ENCODE measurements at regions of chr11 and their contacts with region 1.

Region 1: DNA sequence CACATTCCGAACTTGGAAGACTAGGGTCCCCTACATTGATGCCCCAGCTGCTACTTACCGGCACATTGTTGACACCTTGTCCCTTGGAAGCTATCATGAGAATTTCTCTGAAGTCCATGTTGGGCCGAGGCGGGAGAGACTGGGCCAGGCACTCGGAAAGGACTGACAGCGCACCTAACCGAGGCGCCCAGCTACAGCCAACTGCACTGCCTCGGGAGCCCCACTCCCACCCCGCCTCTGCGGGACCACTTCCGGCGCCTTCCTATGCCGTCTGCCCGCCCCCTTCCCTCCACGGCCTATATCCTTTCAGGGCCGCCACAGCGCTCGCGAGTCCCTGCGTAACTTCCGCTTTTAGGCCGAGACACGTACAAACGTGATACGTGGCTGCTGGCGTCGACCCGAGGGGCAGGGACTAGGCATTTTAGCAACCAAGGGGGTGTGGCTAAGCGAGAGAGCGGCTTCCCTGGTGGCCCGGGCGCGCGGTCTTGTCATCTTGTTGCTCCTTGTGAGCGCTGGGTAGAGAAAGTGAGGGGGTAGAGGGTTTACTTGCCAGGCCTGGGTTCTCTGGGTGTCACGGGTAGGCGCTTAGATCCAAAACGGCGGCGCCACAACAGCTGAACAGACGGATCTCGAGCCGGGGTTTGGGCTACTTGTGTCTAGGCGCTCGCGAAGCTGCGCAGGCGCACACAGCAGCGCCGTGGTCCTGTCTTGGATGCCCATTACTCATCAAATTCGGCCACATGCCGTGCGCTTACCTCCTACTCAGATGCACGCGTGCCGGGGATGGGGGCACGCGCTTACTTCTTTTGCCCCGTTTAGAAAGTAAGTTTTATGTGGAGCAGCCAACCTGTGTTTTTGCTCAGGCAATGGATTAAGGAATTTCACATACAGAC is at the start of gene SPTY2D1:
- DNase-seq: peak; percentile 100
- H3K4me3 ChIP-seq: peak within 1 kb of the TSS; percentile 75 to 96
- H3K27ac ChIP-seq: peak within 1 kb of the TSS; percentile 95 to 98
- H3K4me1 ChIP-seq: peaks cover 0 to 23% (median 16%) of the 10 kb centered on the region in 4 donors
- H3K27me3 ChIP-seq: no peaks in the 10 kb centered on the region
- CTCF ChIP-seq: peak in 1 of 2 experiments; percentile 7

Region 2: DNA sequence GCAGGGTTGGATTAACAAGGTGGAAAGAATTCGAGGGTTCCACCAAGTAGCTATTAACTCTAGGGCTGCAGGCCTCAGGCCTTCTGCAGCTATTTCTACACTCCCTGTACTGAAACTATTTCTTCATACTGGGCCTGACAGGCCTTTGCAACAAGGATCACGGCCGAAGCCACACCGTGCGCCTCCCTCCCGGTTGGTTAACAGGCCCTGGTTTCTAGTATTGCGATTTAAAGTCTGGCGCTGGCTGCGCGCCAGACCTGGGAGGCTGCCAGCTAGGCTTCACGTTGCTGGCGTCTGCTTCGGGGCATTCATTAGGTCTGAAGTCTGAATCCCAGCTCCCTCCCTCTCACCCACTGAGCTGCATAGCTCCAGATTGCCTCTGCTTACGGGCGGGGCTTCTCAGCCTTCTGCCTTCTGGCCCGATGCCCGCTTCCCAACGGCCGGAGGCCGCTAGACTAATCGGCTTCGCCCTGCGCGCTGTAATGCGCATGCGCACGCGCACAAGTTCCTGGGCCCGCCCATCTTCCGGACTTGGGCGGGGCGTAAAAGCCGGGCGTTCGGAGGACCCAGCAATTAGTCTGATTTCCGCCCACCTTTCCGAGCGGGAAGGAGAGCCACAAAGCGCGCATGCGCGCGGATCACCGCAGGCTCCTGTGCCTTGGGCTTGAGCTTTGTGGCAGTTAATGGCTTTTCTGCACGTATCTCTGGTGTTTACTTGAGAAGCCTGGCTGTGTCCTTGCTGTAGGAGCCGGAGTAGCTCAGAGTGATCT is 238.5 kb before region 1 on chr11:
- intact Hi-C with region 1: loop called (anchors 10 kb)
- DNase-seq: peak; percentile 98 to 99
- H3K4me3 ChIP-seq: peak overlapping the region; percentile 90 to 97
- H3K27ac ChIP-seq: peak overlapping the region; percentile 97 to 99
- H3K4me1 ChIP-seq: peaks cover 0 to 45% (median 27%) of the 10 kb centered on the region in 4 donors
- H3K27me3 ChIP-seq: no peaks in the 10 kb centered on the region
- CTCF ChIP-seq: no peak

Region 3: DNA sequence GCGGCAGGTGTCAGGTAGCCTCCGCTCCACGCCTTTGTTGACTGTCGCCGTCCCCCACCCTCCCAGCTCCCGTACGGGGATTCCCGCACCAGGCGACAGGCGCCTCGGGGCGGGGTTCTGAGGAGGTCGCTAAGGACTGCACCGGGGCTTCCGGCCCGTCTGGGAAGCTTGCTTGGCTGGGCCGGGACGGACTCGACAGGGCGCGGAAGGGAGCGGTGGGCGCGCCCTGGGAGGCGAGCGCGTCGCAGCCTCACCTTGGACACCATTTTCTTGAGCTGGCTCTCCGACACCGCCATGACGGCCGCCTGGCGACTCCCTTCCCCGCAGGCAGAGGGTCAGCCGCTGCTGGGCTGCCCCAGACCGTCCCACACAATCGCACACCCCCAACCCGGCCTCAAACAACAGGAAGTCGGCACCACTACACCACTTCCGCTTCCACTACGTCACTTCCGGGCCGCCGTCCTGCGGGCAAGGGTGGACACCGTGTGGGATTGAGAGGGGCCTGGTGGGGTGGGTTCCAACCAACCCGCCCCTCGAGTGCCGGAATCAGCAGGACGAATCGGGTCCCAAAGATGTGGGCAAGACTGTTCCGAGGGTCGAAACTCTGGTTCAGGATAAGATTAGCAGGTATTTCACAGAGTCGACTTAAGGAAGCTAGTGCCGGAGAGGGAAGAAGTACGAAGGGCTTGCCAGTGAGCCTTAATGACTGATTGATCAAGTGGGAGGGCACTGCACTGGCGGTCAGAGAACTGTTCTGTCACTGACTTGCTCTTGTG is 107.7 kb before region 1 on chr11 and contains the start of gene TSG101:
- intact Hi-C with region 1: loop called (anchors 10 kb)
- DNase-seq: peak; percentile 94 to 95
- H3K4me3 ChIP-seq: peak within 1 kb of the TSS; percentile 84 to 95
- H3K27ac ChIP-seq: peak within 1 kb of the TSS; percentile 92 to 93
- H3K4me1 ChIP-seq: peaks cover 0 to 37% (median 11%) of the 10 kb centered on the region in 4 donors
- H3K27me3 ChIP-seq: no peaks in the 10 kb centered on the region
- CTCF ChIP-seq: no peak

Region 4: GRCh38 chr11:18588297-18589252 is 45.8 kb before region 1 on chr11 and contains the start of gene UEVLD:
- intact Hi-C with region 1: loop called (anchors 10 kb)
- DNase-seq: peak; percentile 87 to 94
- H3K4me3 ChIP-seq: peak within 1 kb of the TSS; percentile 66 to 67
- H3K27ac ChIP-seq: peak within 1 kb of the TSS; percentile 72 to 80
- H3K4me1 ChIP-seq: peaks cover 0 to 42% (median 25%) of the 10 kb centered on the region in 4 donors
- H3K27me3 ChIP-seq: no peaks in the 10 kb centered on the region
- CTCF ChIP-seq: no peak

Region 5: GRCh38 chr11:18721561-18722292 is 87.3 kb after region 1 on chr11:
- intact Hi-C with region 1: loop called (anchors 5 kb)
- DNase-seq: peak in 1 of 2 donors; percentile 39
- H3K4me3 ChIP-seq: peak overlapping the region; percentile 50 to 72
- H3K27ac ChIP-seq: peak overlapping the region; percentile 76 to 78
- H3K4me1 ChIP-seq: peaks cover 0 to 7% (median 4%) of the 10 kb centered on the region in 4 donors
- H3K27me3 ChIP-seq: peaks cover 0 to 3% of the 10 kb centered on the region in 2 donors
- CTCF ChIP-seq: peak; percentile 76 to 78